Activated CD8-positive, alpha-beta T cell treated with anti-CD3 and anti-CD28 coated beads for 36 hours (primary cell): ENCODE measurements at regions of chr11 and their contacts with region 1.

Region 1: GRCh38 chr11:74929431-74930363 is 19.2 kb downstream of the XRRA1 start:
- DNase-seq: peak; percentile 87
- ATAC-seq: peak; percentile 57
- H3K4me3 Mint-ChIP-seq: no peak overlapping the region
- H3K27ac Mint-ChIP-seq: no peak overlapping the region
- H3K4me1 Mint-ChIP-seq: peaks cover 29% of the 10 kb centered on the region
- H3K27me3 Mint-ChIP-seq: no peaks in the 10 kb centered on the region
- CTCF ChIP-seq: peak; percentile 97

Region 2: GRCh38 chr11:74948898-74949747 is 19.4 kb after region 1 on chr11 and contains the starts of genes SPCS2 and XRRA1:
- CTCF ChIA-PET with region 1: interaction called, 17 read pairs
- POLR2A ChIA-PET with region 1: interaction called, 6 read pairs
- intact Hi-C with region 1: no loop called
- DNase-seq: peak; percentile 100
- ATAC-seq: peak; percentile 98
- H3K4me3 Mint-ChIP-seq: peak within 1 kb of the TSS; percentile 99
- H3K27ac Mint-ChIP-seq: peak within 1 kb of the TSS; percentile 95
- H3K4me1 Mint-ChIP-seq: peaks cover 46% of the 10 kb centered on the region
- H3K27me3 Mint-ChIP-seq: no peaks in the 10 kb centered on the region
- CTCF ChIP-seq: no peak
- total RNA-seq, gene SPCS2: 99.3 to 117 TPM
- total RNA-seq, gene XRRA1: 19.0 to 19.3 TPM

Region 3: DNA sequence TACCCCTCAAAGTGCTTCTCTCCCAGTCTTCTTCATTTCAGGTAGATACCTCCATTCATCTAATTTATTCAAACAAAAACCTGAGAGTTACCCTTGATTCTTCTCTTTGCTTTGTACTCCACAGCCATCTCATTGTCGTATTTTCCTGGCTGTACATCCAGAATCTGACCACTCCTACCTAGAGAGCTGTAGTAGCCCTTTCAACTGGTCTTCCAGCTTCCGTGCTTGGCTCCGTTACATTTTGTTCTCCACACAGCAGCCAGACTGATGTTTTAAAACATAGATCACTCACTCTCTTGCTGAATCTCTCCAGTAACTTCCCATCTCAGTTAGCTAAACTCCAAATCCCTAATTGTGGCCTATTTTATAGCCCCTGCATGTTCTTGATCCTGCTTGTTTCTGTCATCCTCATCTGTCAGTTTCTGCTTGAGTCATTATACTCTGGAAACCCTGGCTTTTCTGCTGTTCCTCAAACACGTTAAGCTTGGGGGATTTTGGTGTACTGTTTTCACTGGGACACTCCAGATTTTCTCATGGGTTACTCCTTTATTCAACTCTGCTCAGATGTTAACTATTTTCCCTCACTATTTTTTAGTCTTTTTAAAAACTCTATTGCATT is 26.8 kb after region 1 on chr11:
- CTCF ChIA-PET with region 1: interaction called, 23 read pairs
- POLR2A ChIA-PET with region 1: interaction called, 3 read pairs
- intact Hi-C with region 1: no loop called
- DNase-seq: no peak
- ATAC-seq: no peak
- H3K4me3 Mint-ChIP-seq: no peak overlapping the region
- H3K27ac Mint-ChIP-seq: no peak overlapping the region
- H3K4me1 Mint-ChIP-seq: peaks cover 68% of the 10 kb centered on the region
- H3K27me3 Mint-ChIP-seq: no peaks in the 10 kb centered on the region
- CTCF ChIP-seq: no peak

Region 4: GRCh38 chr11:74966651-74967050 is 37.0 kb after region 1 on chr11:
- CTCF ChIA-PET with region 1: interaction called, 23 read pairs
- POLR2A ChIA-PET with region 1: no interaction called
- intact Hi-C with region 1: no loop called
- DNase-seq: no peak
- ATAC-seq: no peak
- H3K4me3 Mint-ChIP-seq: no peak overlapping the region
- H3K27ac Mint-ChIP-seq: no peak overlapping the region
- H3K4me1 Mint-ChIP-seq: peaks cover 18% of the 10 kb centered on the region
- H3K27me3 Mint-ChIP-seq: no peaks in the 10 kb centered on the region
- CTCF ChIP-seq: no peak

Region 5: GRCh38 chr11:75022759-75023396 is 93.2 kb after region 1 on chr11:
- CTCF ChIA-PET with region 1: interaction called, 28 read pairs
- POLR2A ChIA-PET with region 1: no interaction called
- intact Hi-C with region 1: loop called (anchors 5 kb)
- DNase-seq: peak; percentile 82
- ATAC-seq: peak; percentile 94
- H3K4me3 Mint-ChIP-seq: no peak overlapping the region
- H3K27ac Mint-ChIP-seq: no peak overlapping the region
- H3K4me1 Mint-ChIP-seq: no peaks in the 10 kb centered on the region
- H3K27me3 Mint-ChIP-seq: no peaks in the 10 kb centered on the region
- CTCF ChIP-seq: peak; percentile 98

Region 6: GRCh38 chr11:75031771-75032549 is 102.3 kb after region 1 on chr11:
- CTCF ChIA-PET with region 1: interaction called, 28 read pairs
- POLR2A ChIA-PET with region 1: no interaction called
- intact Hi-C with region 1: loop called (anchors 5 kb)
- DNase-seq: peak; percentile 78
- ATAC-seq: peak; percentile 58
- H3K4me3 Mint-ChIP-seq: no peak overlapping the region
- H3K27ac Mint-ChIP-seq: no peak overlapping the region
- H3K4me1 Mint-ChIP-seq: peaks cover 2% of the 10 kb centered on the region
- H3K27me3 Mint-ChIP-seq: no peaks in the 10 kb centered on the region
- CTCF ChIP-seq: peak; percentile 78

Region 7: DNA sequence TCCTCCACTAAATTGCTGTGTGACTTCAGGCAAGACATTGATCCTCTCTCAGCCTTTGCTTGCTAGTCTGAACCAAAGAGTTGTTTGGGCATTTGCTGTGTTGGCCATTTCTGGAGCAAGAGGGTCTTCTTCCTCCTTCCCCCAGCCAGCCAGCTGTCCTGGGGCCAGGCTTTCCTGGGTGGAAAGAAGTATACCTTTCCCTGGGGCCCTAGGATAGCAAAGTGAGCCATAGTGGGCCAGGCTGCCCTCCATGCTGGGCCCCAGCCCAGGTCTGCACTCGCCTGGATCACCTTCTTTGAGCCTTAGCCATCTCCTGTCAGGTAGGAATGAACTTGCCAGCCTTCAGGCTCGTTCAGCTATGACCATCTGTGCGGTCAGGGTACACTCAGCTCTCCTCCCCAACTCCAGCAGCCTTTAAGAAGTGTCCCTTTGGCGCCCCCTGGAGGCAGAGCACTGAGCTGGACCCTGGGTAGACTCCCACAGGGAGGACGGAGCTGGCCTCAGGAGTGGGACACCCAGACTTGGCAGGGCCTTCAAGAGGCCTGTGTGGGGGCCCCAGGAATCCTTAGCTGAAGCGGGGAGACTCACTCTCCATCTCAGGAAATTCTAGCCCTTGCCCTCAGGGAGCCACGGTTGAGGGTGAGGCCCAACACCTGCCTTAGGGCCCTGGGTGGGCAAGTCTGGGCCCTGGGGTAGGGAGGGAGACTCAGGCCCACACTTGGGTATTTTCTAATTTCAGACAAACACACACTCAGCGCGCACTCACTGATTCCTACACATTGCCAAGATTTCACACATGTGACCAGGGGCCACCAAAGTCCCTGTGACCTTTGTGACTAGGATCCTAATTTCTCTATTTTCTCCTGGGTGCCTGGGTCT is 275.2 kb after region 1 on chr11:
- CTCF ChIA-PET with region 1: interaction called, 17 read pairs
- POLR2A ChIA-PET with region 1: no interaction called
- intact Hi-C with region 1: no loop called
- DNase-seq: peak; percentile 93
- ATAC-seq: peak; percentile 99
- H3K4me3 Mint-ChIP-seq: no peak overlapping the region
- H3K27ac Mint-ChIP-seq: no peak overlapping the region
- H3K4me1 Mint-ChIP-seq: no peaks in the 10 kb centered on the region
- H3K27me3 Mint-ChIP-seq: peaks cover 1% of the 10 kb centered on the region
- CTCF ChIP-seq: peak; percentile 87